Activated CD4-positive, alpha-beta memory T cell treated with anti-CD3 and anti-CD28 coated beads for 36 hours (primary cell): ENCODE measurements at regions of chr7 and their contacts with region 1.

Region 1: GRCh38 chr7:116671681-116672595 is at the start of gene MET:
- DNase-seq: peak; percentile 73
- H3K4me3 Mint-ChIP-seq: peak within 1 kb of the TSS; percentile 66
- H3K27ac Mint-ChIP-seq: no peak within 1 kb of the TSS
- H3K4me1 Mint-ChIP-seq: peaks cover 8% of the 10 kb centered on the region
- H3K27me3 Mint-ChIP-seq: peaks cover 61% of the 10 kb centered on the region
- total RNA-seq, gene MET: 1.4 to 1.8 TPM

Region 2: DNA sequence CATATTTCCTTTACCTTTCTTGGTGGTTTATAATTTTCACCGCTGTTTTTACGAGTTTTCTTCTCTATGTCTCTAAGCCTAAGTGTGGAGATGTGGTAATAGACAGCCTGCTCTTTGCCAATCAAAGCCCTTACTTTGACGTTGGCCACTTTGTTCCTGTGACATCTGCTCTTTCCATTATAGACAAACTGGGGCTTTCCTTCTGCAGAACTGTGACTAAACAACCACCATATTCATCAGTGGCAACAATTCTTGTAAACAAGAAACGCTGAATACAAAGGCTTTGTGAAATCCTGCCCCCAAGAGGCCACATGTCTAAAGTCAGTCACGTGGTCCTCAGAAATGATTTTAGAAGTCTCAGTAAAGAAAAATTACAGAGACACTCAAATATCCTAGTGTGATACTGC is 130.8 kb after region 1 on chr7:
- CTCF ChIA-PET with region 1: interaction called, 6 read pairs
- POLR2A ChIA-PET with region 1: no interaction called
- intact Hi-C with region 1: loop called (anchors 1 kb)
- DNase-seq: peak; percentile 56
- H3K4me3 Mint-ChIP-seq: no peak overlapping the region
- H3K27ac Mint-ChIP-seq: no peak overlapping the region
- H3K4me1 Mint-ChIP-seq: peaks cover 16% of the 10 kb centered on the region
- H3K27me3 Mint-ChIP-seq: peaks cover 19% of the 10 kb centered on the region